B cell (primary cell): ENCODE measurements at regions of chr1 and their contacts with region 1.

Region 1: GRCh38 chr1:198157241-198157846 is 546 bp downstream of the NEK7 start:
- DNase-seq: peak; percentile 90
- ATAC-seq: peak; percentile 51
- H3K4me3 ChIP-seq: peak overlapping the region; percentile 64 to 97 (median 87)
- H3K4me3 Mint-ChIP-seq: peak overlapping the region; percentile 99
- H3K27ac ChIP-seq: peak overlapping the region; percentile 88 to 95
- H3K27ac Mint-ChIP-seq: peak overlapping the region; percentile 97
- H3K4me1 ChIP-seq: peaks cover 24 to 36% of the 10 kb centered on the region in 2 donors
- H3K4me1 Mint-ChIP-seq: peaks cover 41% of the 10 kb centered on the region
- H3K27me3 ChIP-seq: no peaks in the 10 kb centered on the region
- H3K27me3 Mint-ChIP-seq: no peaks in the 10 kb centered on the region
- CTCF ChIP-seq: no peak

Region 2: GRCh38 chr1:197146197-197146889 is 1011.0 kb before region 1 on chr1 and contains the start of gene ASPM:
- CTCF ChIA-PET with region 1: no interaction called
- POLR2A ChIA-PET with region 1: no interaction called
- intact Hi-C with region 1: loop called (anchors 5 kb)
- DNase-seq: peak; percentile 94
- ATAC-seq: peak; percentile 100
- H3K4me3 ChIP-seq: peak within 1 kb of the TSS; percentile 64 to 88 (median 83)
- H3K4me3 Mint-ChIP-seq: peak within 1 kb of the TSS; percentile 92
- H3K27ac ChIP-seq: peak within 1 kb of the TSS; percentile 26 to 60
- H3K27ac Mint-ChIP-seq: peak within 1 kb of the TSS; percentile 69
- H3K4me1 ChIP-seq: peaks cover 5 to 11% of the 10 kb centered on the region in 2 donors
- H3K4me1 Mint-ChIP-seq: peaks cover 31% of the 10 kb centered on the region
- H3K27me3 ChIP-seq: peaks cover 0 to 4% (median 2%) of the 10 kb centered on the region in 4 experiments
- H3K27me3 Mint-ChIP-seq: peaks cover 3% of the 10 kb centered on the region
- CTCF ChIP-seq: no peak
- total RNA-seq, gene ASPM: 0.19 and 0.27 TPM in 2 replicates

Region 3: GRCh38 chr1:197902454-197903195 is 254.7 kb before region 1 on chr1 and contains the start of gene C1orf53:
- CTCF ChIA-PET with region 1: no interaction called
- POLR2A ChIA-PET with region 1: no interaction called
- intact Hi-C with region 1: loop called (anchors 5 kb)
- DNase-seq: peak; percentile 88
- ATAC-seq: peak; percentile 93
- H3K4me3 ChIP-seq: peak within 1 kb of the TSS; percentile 59 to 84 (median 77)
- H3K4me3 Mint-ChIP-seq: peak within 1 kb of the TSS; percentile 98
- H3K27ac ChIP-seq: peak within 1 kb of the TSS; percentile 39 to 61
- H3K27ac Mint-ChIP-seq: peak within 1 kb of the TSS; percentile 90
- H3K4me1 ChIP-seq: peaks cover 13 to 17% of the 10 kb centered on the region in 2 donors
- H3K4me1 Mint-ChIP-seq: peaks cover 17% of the 10 kb centered on the region
- H3K27me3 ChIP-seq: peaks cover 1 to 43% (median 34%) of the 10 kb centered on the region in 4 experiments
- H3K27me3 Mint-ChIP-seq: peaks cover 52% of the 10 kb centered on the region
- CTCF ChIP-seq: no peak
- total RNA-seq, gene C1orf53: not detected in 2 replicates

Region 4: GRCh38 chr1:198175423-198176170 is 18.3 kb after region 1 on chr1:
- CTCF ChIA-PET with region 1: interaction called, 11 read pairs
- POLR2A ChIA-PET with region 1: interaction called, 4 read pairs
- intact Hi-C with region 1: loop called (anchors 1 kb)
- DNase-seq: peak; percentile 36
- ATAC-seq: peak; percentile 54
- H3K4me3 ChIP-seq: no peak overlapping the region
- H3K4me3 Mint-ChIP-seq: peak overlapping the region; percentile 76
- H3K27ac ChIP-seq: peak overlapping the region in 1 of 2 donors; percentile 56
- H3K27ac Mint-ChIP-seq: peak overlapping the region; percentile 81
- H3K4me1 ChIP-seq: peaks cover 30 to 52% of the 10 kb centered on the region in 2 donors
- H3K4me1 Mint-ChIP-seq: peaks cover 76% of the 10 kb centered on the region
- H3K27me3 ChIP-seq: no peaks in the 10 kb centered on the region
- H3K27me3 Mint-ChIP-seq: no peaks in the 10 kb centered on the region
- CTCF ChIP-seq: no peak

Region 5: DNA sequence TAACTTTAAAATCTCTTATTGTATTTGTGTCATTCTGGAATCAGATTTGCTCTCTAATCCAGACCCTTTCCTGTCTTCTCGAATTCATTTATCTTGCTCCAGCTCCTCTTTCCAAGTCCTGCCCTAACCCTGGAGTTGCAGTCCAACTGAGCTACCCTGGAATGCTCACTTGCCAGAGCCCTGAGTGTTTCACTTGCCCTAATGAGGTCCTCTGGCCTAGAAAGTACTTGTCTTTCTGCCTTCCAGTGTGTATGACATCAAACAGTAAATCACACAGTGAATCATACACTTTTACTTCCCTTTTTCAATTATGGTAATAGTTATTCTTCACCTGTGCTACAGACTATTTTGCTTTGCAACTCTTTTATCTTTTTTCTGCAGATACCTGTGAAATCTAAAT is 96.3 kb after region 1 on chr1:
- CTCF ChIA-PET with region 1: interaction called, 5 read pairs
- POLR2A ChIA-PET with region 1: no interaction called
- intact Hi-C with region 1: loop called (anchors 2 kb)
- DNase-seq: peak; percentile 51
- ATAC-seq: peak; percentile 98
- H3K4me3 ChIP-seq: no peak overlapping the region
- H3K4me3 Mint-ChIP-seq: peak overlapping the region; percentile 69
- H3K27ac ChIP-seq: peak overlapping the region in 1 of 2 donors; percentile 50
- H3K27ac Mint-ChIP-seq: peak overlapping the region; percentile 68
- H3K4me1 ChIP-seq: peaks cover 3 to 4% of the 10 kb centered on the region in 2 donors
- H3K4me1 Mint-ChIP-seq: peaks cover 25% of the 10 kb centered on the region
- H3K27me3 ChIP-seq: no peaks in the 10 kb centered on the region
- H3K27me3 Mint-ChIP-seq: no peaks in the 10 kb centered on the region
- CTCF ChIP-seq: no peak

Region 6: GRCh38 chr1:198380275-198380674 is 222.9 kb after region 1 on chr1:
- CTCF ChIA-PET with region 1: no interaction called
- POLR2A ChIA-PET with region 1: no interaction called
- intact Hi-C with region 1: no loop called
- DNase-seq: no peak
- ATAC-seq: no peak
- H3K4me3 ChIP-seq: no peak overlapping the region
- H3K4me3 Mint-ChIP-seq: no peak overlapping the region
- H3K27ac ChIP-seq: no peak overlapping the region
- H3K27ac Mint-ChIP-seq: no peak overlapping the region
- H3K4me1 ChIP-seq: peaks cover 0 to 2% of the 10 kb centered on the region in 2 donors
- H3K4me1 Mint-ChIP-seq: peaks cover 6% of the 10 kb centered on the region
- H3K27me3 ChIP-seq: peaks cover 0 to 2% (median 0%) of the 10 kb centered on the region in 4 experiments
- H3K27me3 Mint-ChIP-seq: peaks cover under 1% of the 10 kb centered on the region
- CTCF ChIP-seq: no peak

Region 7: DNA sequence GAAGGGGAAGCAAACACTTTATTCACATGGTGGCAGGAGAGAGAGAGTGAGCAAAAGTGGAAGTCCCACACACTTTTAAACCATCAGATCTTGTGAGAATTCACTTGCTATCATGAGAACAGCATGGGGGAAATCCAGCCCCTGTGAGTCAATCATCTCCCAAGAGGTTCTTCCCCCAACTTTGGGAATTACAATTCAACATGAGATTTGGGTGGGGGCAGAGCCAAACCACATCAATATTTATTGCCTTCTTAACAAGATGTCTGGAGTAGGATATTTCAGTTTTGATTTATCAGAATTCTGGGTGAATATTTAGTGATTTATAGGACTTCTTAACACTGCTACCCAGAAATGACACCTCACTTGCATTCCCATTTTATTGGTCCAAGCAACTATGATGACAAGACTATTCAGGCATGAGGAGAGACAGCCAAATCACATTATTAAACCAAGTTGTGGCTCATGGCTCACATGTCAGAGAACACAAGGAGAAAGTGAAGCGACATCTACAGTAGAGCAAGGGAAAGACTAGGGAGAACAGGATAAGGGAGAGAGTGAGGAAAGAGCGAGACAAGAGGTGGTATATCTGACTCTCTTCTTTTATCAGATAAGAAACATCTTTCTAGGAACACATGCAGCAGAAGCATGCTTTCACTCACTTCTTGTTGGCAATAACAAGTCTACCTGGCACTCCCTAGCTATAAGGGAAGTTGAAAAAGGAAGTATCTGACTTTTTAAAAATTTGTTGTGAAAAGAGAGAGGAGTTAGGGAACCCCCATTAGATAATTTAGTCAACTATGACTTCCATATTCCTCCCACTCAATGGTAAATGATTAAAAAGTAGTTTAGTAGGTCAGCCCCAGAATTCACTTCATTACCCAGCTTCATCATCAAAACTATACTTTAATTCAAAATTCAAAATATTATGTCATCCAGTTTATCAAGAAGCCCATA is 444.9 kb after region 1 on chr1:
- CTCF ChIA-PET with region 1: no interaction called
- POLR2A ChIA-PET with region 1: no interaction called
- intact Hi-C with region 1: no loop called
- DNase-seq: peak; percentile 67
- ATAC-seq: peak; percentile 28
- H3K4me3 ChIP-seq: peak overlapping the region in 2 of 5 experiments; percentile 9 to 26
- H3K4me3 Mint-ChIP-seq: peak overlapping the region; percentile 69
- H3K27ac ChIP-seq: peak overlapping the region; percentile 74 to 94
- H3K27ac Mint-ChIP-seq: peak overlapping the region; percentile 99
- H3K4me1 ChIP-seq: peaks cover 59 to 66% of the 10 kb centered on the region in 2 donors
- H3K4me1 Mint-ChIP-seq: peaks cover 78% of the 10 kb centered on the region
- H3K27me3 ChIP-seq: no peaks in the 10 kb centered on the region
- H3K27me3 Mint-ChIP-seq: no peaks in the 10 kb centered on the region
- CTCF ChIP-seq: no peak